ENCODE measurements at regions of chr3 and their contacts with region 1.

Region 1: DNA sequence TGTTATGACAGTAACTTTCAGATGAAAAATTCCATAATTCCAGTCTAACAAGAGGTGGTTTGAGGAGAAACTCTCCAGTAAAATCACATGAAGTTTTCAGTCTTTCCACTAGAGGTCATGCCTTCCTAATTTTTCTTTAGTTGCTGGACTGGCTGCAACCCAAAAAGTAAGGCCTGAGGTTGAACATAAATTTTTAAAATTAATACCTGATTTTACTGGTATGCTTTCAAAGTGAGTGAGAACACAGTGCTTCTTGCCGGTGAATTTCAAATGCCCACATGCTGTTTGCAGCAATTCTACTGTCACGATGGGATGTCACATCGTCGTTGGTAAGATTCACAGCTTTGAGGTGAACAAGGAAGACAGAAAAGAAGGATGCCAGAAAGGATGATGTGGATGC is 89.0 kb upstream of the FGF12 start:
- DNase-seq: peak; percentile 65
- H3K4me3 Mint-ChIP-seq: no peak overlapping the region
- H3K27ac Mint-ChIP-seq: no peak overlapping the region
- H3K4me1 Mint-ChIP-seq: peaks cover 35% of the 10 kb centered on the region
- H3K27me3 Mint-ChIP-seq: no peaks in the 10 kb centered on the region
- CTCF ChIP-seq: peak; percentile 64

Region 2: GRCh38 chr3:192467230-192468140 is 348.9 kb before region 1 on chr3:
- CTCF ChIA-PET with region 1: interaction called, 36 read pairs
- POLR2A ChIA-PET with region 1: no interaction called
- intact Hi-C with region 1: no loop called
- DNase-seq: peak; percentile 72
- H3K4me3 Mint-ChIP-seq: no peak overlapping the region
- H3K27ac Mint-ChIP-seq: no peak overlapping the region
- H3K4me1 Mint-ChIP-seq: no peaks in the 10 kb centered on the region
- H3K27me3 Mint-ChIP-seq: peaks cover 82% of the 10 kb centered on the region
- CTCF ChIP-seq: peak; percentile 94

Region 3: DNA sequence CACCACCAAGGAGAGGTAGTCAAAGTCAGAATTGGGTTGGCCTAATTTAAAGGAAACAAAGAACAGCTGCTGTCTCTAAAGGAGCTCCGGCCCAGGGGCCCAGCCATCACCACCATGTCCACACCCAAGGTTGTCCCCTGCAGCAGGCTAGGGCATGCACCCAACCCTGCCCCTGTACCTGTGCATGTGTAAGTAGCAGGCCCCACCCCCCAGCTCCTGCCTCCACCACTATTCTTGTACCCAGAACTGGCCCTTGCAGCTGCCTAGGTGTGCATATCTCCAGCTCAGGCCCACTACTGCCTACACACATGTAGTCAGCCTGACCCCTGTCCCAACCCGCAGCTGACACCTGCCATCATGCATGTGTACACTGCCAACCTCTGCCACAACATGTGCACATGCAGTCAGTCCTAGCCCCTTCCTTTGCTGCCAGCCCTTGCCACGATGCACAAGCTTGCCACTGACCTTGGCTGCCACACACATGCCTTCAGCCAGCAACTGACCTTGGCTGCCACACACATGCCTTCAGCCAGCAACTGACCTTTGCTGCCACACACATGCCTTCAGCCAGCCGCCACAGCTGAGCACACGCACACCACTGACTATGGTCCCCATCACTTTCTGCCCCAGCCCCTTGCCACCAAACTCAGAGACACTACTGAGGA is 128.7 kb before region 1 on chr3:
- CTCF ChIA-PET with region 1: no interaction called
- POLR2A ChIA-PET with region 1: no interaction called
- intact Hi-C with region 1: no loop called
- DNase-seq: no peak
- H3K4me3 Mint-ChIP-seq: no peak overlapping the region
- H3K27ac Mint-ChIP-seq: no peak overlapping the region
- H3K4me1 Mint-ChIP-seq: no peaks in the 10 kb centered on the region
- H3K27me3 Mint-ChIP-seq: peaks cover 36% of the 10 kb centered on the region
- CTCF ChIP-seq: no peak

Region 4: GRCh38 chr3:192851821-192852424 is 35.6 kb after region 1 on chr3:
- CTCF ChIA-PET with region 1: interaction called, 5 read pairs
- POLR2A ChIA-PET with region 1: interaction called, 3 read pairs
- intact Hi-C with region 1: loop called (anchors 1 kb)
- DNase-seq: peak; percentile 98
- H3K4me3 Mint-ChIP-seq: peak overlapping the region; percentile 19
- H3K27ac Mint-ChIP-seq: no peak overlapping the region
- H3K4me1 Mint-ChIP-seq: peaks cover 23% of the 10 kb centered on the region
- H3K27me3 Mint-ChIP-seq: peaks cover 19% of the 10 kb centered on the region
- CTCF ChIP-seq: no peak

Region 5: GRCh38 chr3:193016437-193016901 is 200.1 kb after region 1 on chr3:
- CTCF ChIA-PET with region 1: interaction called, 21 read pairs
- POLR2A ChIA-PET with region 1: no interaction called
- intact Hi-C with region 1: no loop called
- DNase-seq: peak; percentile 60
- H3K4me3 Mint-ChIP-seq: no peak overlapping the region
- H3K27ac Mint-ChIP-seq: peak overlapping the region; percentile 55
- H3K4me1 Mint-ChIP-seq: peaks cover 9% of the 10 kb centered on the region
- H3K27me3 Mint-ChIP-seq: no peaks in the 10 kb centered on the region
- CTCF ChIP-seq: no peak

Region 6: DNA sequence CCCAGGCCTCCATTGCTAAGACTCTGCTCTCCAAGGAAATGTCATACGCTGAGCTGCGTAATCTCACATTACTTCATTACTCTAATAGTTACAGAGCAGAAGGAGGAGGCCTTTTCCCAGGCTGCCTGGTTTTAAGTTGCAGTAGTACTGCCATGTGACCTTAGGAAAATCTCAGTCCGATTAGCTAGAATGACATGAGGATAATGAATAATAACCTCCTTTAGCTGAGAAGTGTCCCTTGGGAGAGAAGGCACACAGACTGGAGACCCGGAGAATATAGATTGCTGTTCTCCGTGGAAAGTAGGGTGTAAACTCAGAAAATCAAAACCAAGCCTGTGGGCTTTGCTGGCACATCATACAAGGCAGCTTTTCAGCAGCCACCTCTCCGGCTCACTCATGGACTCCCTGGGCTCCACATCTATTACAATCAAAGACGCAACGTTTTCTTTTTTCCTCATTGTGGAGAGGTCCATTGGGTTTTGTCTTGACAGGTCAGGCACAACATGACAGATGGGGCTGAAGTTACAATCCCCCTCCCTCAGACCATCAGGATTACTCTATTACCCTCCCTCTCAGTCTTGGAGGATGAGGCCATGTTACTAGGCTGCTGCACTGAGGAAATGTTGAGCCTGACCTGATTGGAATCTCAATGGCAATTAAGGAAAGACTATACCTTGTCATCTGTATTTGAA is 236.1 kb after region 1 on chr3:
- CTCF ChIA-PET with region 1: interaction called, 489 read pairs
- POLR2A ChIA-PET with region 1: no interaction called
- intact Hi-C with region 1: no loop called
- DNase-seq: no peak
- H3K4me3 Mint-ChIP-seq: no peak overlapping the region
- H3K27ac Mint-ChIP-seq: no peak overlapping the region
- H3K4me1 Mint-ChIP-seq: no peaks in the 10 kb centered on the region
- H3K27me3 Mint-ChIP-seq: peaks cover 79% of the 10 kb centered on the region
- CTCF ChIP-seq: no peak

Region 7: GRCh38 chr3:193457526-193457925 is 641.2 kb after region 1 on chr3:
- CTCF ChIA-PET with region 1: interaction called, 37 read pairs
- POLR2A ChIA-PET with region 1: no interaction called
- intact Hi-C with region 1: loop called (anchors 1 kb)
- DNase-seq: no peak
- H3K4me3 Mint-ChIP-seq: no peak overlapping the region
- H3K27ac Mint-ChIP-seq: no peak overlapping the region
- H3K4me1 Mint-ChIP-seq: no peaks in the 10 kb centered on the region
- H3K27me3 Mint-ChIP-seq: peaks cover 72% of the 10 kb centered on the region
- CTCF ChIP-seq: no peak